Esophagus muscularis mucosa (tissue), 4 donors: ENCODE measurements at regions of chr10 and their contacts with region 1.

Region 1: GRCh38 chr10:101441541-101442455 is 87.8 kb downstream of the BTRC start:
- DNase-seq: no peak
- H3K4me3 ChIP-seq: no peak overlapping the region
- H3K27ac ChIP-seq: no peak overlapping the region
- H3K4me1 ChIP-seq: peaks cover 0 to 14% (median 6%) of the 10 kb centered on the region in 4 donors
- H3K27me3 ChIP-seq: no peaks in the 10 kb centered on the region
- CTCF ChIP-seq: peak; percentile 45 to 56 (median 55)
- EP300 ChIP-seq: no peak
- POLR2A ChIP-seq: no peak

Region 2: DNA sequence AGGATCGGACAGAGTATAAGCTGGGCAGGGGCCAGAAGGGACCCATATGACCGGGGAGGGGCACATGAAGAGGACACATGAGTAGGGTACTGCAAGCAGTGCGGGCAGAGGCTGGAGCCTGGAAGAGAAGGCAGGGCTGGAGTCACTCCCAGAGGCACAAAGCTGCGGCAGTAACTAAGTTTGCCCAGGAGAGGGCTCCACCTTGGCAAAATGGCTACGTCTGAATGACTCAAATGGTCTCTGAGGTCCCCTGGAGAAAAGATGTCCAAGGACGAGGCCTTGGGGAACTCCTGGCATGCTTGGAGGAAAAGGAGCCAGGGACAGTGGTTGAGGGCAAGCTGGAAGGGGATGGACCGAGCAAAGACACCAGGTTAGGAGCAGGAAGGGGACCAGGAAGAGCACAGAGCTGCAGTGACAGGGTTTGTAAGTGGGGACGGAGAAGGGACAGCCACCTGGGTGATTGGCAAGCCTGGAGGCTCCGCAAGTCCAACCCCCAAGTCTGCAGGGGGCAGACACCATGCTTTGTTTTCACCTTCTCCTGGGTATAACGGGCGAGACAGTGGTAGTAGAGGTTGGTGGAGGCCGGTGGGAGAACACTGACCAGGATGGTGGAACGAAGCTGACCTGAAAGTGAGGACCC is 169.4 kb before region 1 on chr10:
- intact Hi-C with region 1: loop called (anchors 2 kb)
- DNase-seq: no peak
- H3K4me3 ChIP-seq: no peak overlapping the region
- H3K27ac ChIP-seq: no peak overlapping the region
- H3K4me1 ChIP-seq: no peaks in the 10 kb centered on the region
- H3K27me3 ChIP-seq: peaks cover 0 to 41% (median 0%) of the 10 kb centered on the region in 4 donors
- CTCF ChIP-seq: peak; percentile 53 to 82 (median 63)
- EP300 ChIP-seq: no peak
- POLR2A ChIP-seq: no peak